ENCODE measurements at regions of chr13 and their contacts with region 1.

Region 1: GRCh38 chr13:95378603-95379002 is 77.4 kb upstream of the ABCC4 start:
- DNase-seq: no peak
- H3K4me3 Mint-ChIP-seq: no peak overlapping the region
- H3K27ac Mint-ChIP-seq: no peak overlapping the region
- H3K4me1 Mint-ChIP-seq: no peaks in the 10 kb centered on the region
- H3K27me3 Mint-ChIP-seq: no peaks in the 10 kb centered on the region
- CTCF ChIP-seq: no peak

Region 2: GRCh38 chr13:95301183-95301967 is 77.2 kb before region 1 on chr13 and contains the start of gene ABCC4:
- CTCF ChIA-PET with region 1: interaction called, 13 read pairs
- intact Hi-C with region 1: loop called (anchors 1 kb)
- DNase-seq: peak; percentile 58
- H3K4me3 Mint-ChIP-seq: peak within 1 kb of the TSS; percentile 83
- H3K27ac Mint-ChIP-seq: no peak within 1 kb of the TSS
- H3K4me1 Mint-ChIP-seq: no peaks in the 10 kb centered on the region
- H3K27me3 Mint-ChIP-seq: no peaks in the 10 kb centered on the region
- CTCF ChIP-seq: no peak
- total RNA-seq, gene ABCC4: 10.0 and 12.5 TPM in 2 replicates

Region 3: GRCh38 chr13:95438297-95438696 is 59.7 kb after region 1 on chr13:
- CTCF ChIA-PET with region 1: no interaction called
- intact Hi-C with region 1: no loop called
- DNase-seq: no peak
- H3K4me3 Mint-ChIP-seq: no peak overlapping the region
- H3K27ac Mint-ChIP-seq: no peak overlapping the region
- H3K4me1 Mint-ChIP-seq: no peaks in the 10 kb centered on the region
- H3K27me3 Mint-ChIP-seq: no peaks in the 10 kb centered on the region
- CTCF ChIP-seq: no peak

Region 4: DNA sequence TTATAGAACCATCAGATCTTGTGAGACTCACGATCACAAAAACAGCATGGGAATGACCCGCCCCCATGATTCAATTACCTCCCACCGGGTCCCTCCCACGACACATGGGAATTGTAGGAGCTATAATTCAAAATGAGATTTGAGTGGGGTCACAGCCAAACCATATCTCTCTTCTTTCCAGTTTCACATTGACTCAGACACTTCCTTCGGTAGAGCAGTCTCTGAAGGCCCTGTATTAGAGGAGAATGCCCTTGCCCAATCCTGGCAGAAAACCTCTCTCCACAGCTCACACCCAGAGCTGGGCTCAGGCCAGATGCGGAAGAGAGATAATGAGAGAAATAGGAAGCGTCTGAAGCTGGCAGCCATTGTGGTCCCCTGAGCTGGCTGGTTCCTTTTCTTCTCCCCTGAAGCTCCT is 101.5 kb after region 1 on chr13:
- CTCF ChIA-PET with region 1: no interaction called
- intact Hi-C with region 1: no loop called
- DNase-seq: no peak
- H3K4me3 Mint-ChIP-seq: no peak overlapping the region
- H3K27ac Mint-ChIP-seq: no peak overlapping the region
- H3K4me1 Mint-ChIP-seq: no peaks in the 10 kb centered on the region
- H3K27me3 Mint-ChIP-seq: no peaks in the 10 kb centered on the region
- CTCF ChIP-seq: no peak